ENCODE measurements at regions of chrX and their contacts with region 1.

Region 1: DNA sequence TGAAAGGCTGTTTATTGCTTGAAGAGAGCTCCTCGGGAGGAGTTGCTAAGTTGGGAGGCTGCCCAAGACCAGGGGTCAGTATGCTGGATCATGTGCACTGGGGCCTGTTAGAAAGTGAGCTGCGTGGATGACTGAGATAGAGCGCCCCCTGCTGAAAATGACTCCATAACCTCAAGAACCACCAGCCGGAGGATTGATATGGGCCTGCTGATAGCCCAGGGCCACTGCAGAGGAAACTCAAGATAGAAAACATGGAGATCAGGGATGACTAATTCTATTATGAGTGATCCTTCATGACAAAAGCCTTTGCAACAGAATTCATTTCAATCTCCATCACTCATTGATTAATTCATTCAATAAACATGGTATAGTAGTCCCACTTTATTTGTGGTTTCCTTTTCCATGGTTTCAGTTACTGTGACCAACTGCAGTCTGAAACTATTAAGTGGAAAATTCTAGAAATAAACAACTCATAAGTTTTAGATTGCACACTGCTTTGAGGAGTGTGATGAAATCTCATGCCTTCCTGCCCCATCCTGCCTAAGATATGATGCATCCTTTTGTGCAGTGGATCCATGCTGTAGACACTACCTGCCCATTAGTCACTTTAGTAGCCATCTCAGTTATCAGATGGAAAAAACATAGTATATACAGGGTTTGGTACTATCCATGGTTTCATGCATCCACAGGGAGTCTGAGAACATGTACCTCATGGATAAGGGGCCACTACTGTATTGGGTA is 126.7 kb upstream of the MBNL3 start:
- DNase-seq: peak; percentile 21 to 64 (median 47)
- H3K4me3 ChIP-seq: no peak overlapping the region
- H3K27ac ChIP-seq: no peak overlapping the region
- H3K4me1 ChIP-seq: no peaks in the 10 kb centered on the region
- H3K27me3 ChIP-seq: peaks cover 8% of the 10 kb centered on the region
- CTCF ChIP-seq: peak; percentile 17 to 41 (median 30)
- POLR2A ChIP-seq: no peak

Region 2: GRCh38 chrX:132226169-132226568 is 389.4 kb before region 1 on chrX:
- intact Hi-C with region 1: loop called in 1 of 2 experiments (anchors 10 kb)
- DNase-seq: no peak
- H3K4me3 ChIP-seq: no peak overlapping the region
- H3K27ac ChIP-seq: no peak overlapping the region
- H3K4me1 ChIP-seq: no peaks in the 10 kb centered on the region
- H3K27me3 ChIP-seq: no peaks in the 10 kb centered on the region
- CTCF ChIP-seq: peak; percentile 6 to 46 (median 30)
- POLR2A ChIP-seq: no peak

Region 3: GRCh38 chrX:132292793-132293192 is 322.8 kb before region 1 on chrX:
- intact Hi-C with region 1: loop called in 1 of 2 experiments (anchors 5 kb)
- DNase-seq: peak; percentile 20 to 58 (median 26)
- H3K4me3 ChIP-seq: no peak overlapping the region
- H3K27ac ChIP-seq: no peak overlapping the region
- H3K4me1 ChIP-seq: no peaks in the 10 kb centered on the region
- H3K27me3 ChIP-seq: peaks cover 3% of the 10 kb centered on the region
- CTCF ChIP-seq: peak; percentile 54 to 74 (median 68)
- POLR2A ChIP-seq: no peak

Measured in adrenal gland (tissue), 19 donors.